ENCODE measurements at regions of chr7 and their contacts with region 1.

Region 1: GRCh38 chr7:36962367-36962766 is 238.1 kb upstream of the AOAH start:
- DNase-seq: no peak
- H3K4me3 Mint-ChIP-seq: no peak overlapping the region
- H3K27ac Mint-ChIP-seq: peak overlapping the region; percentile 64
- H3K4me1 Mint-ChIP-seq: peaks cover 37% of the 10 kb centered on the region
- H3K27me3 Mint-ChIP-seq: no peaks in the 10 kb centered on the region

Region 2: GRCh38 chr7:36852017-36852416 is 110.3 kb before region 1 on chr7:
- intact Hi-C with region 1: loop called (anchors 5 kb)
- DNase-seq: no peak
- H3K4me3 Mint-ChIP-seq: peak overlapping the region; percentile 36
- H3K27ac Mint-ChIP-seq: peak overlapping the region; percentile 79
- H3K4me1 Mint-ChIP-seq: peaks cover 24% of the 10 kb centered on the region
- H3K27me3 Mint-ChIP-seq: no peaks in the 10 kb centered on the region

Region 3: DNA sequence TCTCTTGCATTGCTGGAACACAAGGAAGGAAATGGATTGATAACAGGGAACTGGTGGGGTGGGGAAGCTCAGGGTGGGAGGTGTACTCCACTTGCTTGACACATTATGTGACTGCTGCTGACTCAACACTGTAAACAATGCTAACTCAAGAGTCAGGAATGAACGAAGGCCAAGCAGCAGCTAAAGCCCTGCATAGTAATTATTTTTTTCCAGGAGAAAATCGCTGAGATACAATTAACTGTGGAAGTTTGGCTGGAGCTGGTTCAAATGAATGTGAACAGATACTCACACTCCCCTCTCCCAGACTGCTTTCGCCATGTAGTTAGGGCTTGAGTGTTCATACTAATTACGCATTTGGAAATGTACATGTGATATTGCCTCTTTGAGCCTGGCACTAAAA is 67.2 kb before region 1 on chr7:
- intact Hi-C with region 1: no loop called
- DNase-seq: no peak
- H3K4me3 Mint-ChIP-seq: no peak overlapping the region
- H3K27ac Mint-ChIP-seq: no peak overlapping the region
- H3K4me1 Mint-ChIP-seq: peaks cover 14% of the 10 kb centered on the region
- H3K27me3 Mint-ChIP-seq: no peaks in the 10 kb centered on the region

Region 4: GRCh38 chr7:36937754-36938563 is 24.4 kb before region 1 on chr7:
- intact Hi-C with region 1: loop called (anchors 2 kb)
- DNase-seq: peak; percentile 90
- H3K4me3 Mint-ChIP-seq: no peak overlapping the region
- H3K27ac Mint-ChIP-seq: peak overlapping the region; percentile 10
- H3K4me1 Mint-ChIP-seq: peaks cover 23% of the 10 kb centered on the region
- H3K27me3 Mint-ChIP-seq: no peaks in the 10 kb centered on the region

Region 5: GRCh38 chr7:37031571-37032257 is 69.3 kb after region 1 on chr7:
- intact Hi-C with region 1: loop called (anchors 2 kb)
- DNase-seq: peak; percentile 72
- H3K4me3 Mint-ChIP-seq: no peak overlapping the region
- H3K27ac Mint-ChIP-seq: peak overlapping the region; percentile 77
- H3K4me1 Mint-ChIP-seq: peaks cover 49% of the 10 kb centered on the region
- H3K27me3 Mint-ChIP-seq: no peaks in the 10 kb centered on the region

Region 6: DNA sequence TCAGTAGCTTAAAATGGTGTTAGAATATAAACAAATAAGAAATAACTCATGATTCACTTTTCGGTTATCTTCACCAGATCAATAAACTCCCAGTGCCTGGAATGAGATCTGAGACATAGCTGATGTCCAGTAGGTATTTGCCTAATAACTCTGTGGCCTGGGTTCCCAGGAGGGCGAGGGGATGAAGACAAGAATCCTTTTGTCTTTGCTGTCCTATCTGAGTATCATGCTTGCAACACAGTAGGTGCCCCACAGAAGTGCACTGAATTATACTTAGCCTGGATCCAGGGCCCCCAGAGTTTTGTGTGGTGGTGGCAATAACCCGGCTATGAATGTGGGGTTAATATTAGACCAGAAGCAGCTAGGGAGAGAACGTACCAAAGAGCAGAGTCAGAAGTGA is 112.0 kb after region 1 on chr7:
- intact Hi-C with region 1: loop called (anchors 5 kb)
- DNase-seq: peak; percentile 54
- H3K4me3 Mint-ChIP-seq: no peak overlapping the region
- H3K27ac Mint-ChIP-seq: no peak overlapping the region
- H3K4me1 Mint-ChIP-seq: peaks cover 30% of the 10 kb centered on the region
- H3K27me3 Mint-ChIP-seq: no peaks in the 10 kb centered on the region

Measured in activated CD4-positive, alpha-beta T cell treated with anti-CD3 and anti-CD28 coated beads, Interleukin-2, amount 10 ng/mL, durations not matched to agents 24 days and 14 days (primary cell).